PC-9 (cell line): ENCODE measurements at regions of chr11 and their contacts with region 1.

Region 1: GRCh38 chr11:65726660-65727059 is 6.1 kb upstream of the RNASEH2C start:
- DNase-seq: peak in 1 of 2 experiments; percentile 31
- H3K4me3 ChIP-seq: no peak overlapping the region
- H3K27ac ChIP-seq: no peak overlapping the region
- H3K4me1 ChIP-seq: no peaks in the 10 kb centered on the region
- H3K27me3 ChIP-seq: peaks cover 6% of the 10 kb centered on the region; the same call in 1 of the 2 replicates
- CTCF ChIP-seq: no peak

Region 2: DNA sequence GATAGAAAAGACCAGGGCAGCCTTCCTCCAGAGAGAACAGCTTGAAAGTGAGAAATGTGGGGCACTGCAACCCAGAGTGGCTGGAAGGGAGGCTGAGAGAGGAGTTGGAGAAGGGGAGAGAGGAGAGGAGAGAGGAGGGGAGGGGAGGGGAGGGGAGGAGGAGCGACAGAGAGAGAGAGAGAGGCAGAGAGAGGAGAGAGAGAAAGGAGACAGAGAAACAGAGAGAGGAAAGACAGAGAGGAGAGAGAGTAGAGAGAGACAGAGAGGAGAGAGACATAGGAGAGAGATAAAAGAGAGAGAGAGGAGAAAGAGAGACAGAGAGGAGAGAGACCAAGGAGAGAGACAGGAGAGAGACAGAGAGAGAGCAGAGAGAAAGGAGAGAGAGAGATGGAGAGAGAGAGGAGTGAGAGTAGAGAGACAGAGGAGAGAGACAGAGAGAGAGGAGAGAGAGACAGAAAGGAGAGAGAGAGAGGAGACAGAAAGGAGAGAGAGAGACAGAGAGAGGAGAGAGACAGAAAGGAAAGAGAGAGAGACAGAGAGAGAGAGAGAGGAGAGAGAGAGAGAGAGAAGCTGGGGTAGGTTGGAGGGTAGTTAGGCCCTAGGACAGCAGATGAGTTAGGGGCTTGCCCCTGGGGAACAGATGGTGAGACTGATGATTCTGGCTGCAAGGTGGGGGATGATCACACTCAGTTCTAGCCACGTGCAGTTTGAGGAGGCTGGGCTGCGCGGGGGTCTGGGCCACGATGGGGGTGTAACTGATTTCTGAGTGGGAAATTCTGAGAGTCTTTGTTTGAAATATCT is 210.3 kb before region 1 on chr11:
- CTCF ChIA-PET with region 1: interaction called, 13 read pairs
- POLR2A ChIA-PET with region 1: no interaction called
- intact Hi-C with region 1: no loop called
- DNase-seq: no peak
- H3K4me3 ChIP-seq: no peak overlapping the region
- H3K27ac ChIP-seq: no peak overlapping the region
- H3K4me1 ChIP-seq: no peaks in the 10 kb centered on the region
- H3K27me3 ChIP-seq: no peaks in the 10 kb centered on the region
- CTCF ChIP-seq: no peak; the same call in 1 of the 2 replicates

Region 3: GRCh38 chr11:65773784-65774411 is 47.2 kb after region 1 on chr11:
- CTCF ChIA-PET with region 1: interaction called, 11 read pairs
- POLR2A ChIA-PET with region 1: no interaction called
- intact Hi-C with region 1: no loop called
- DNase-seq: no peak
- H3K4me3 ChIP-seq: no peak overlapping the region
- H3K27ac ChIP-seq: no peak overlapping the region
- H3K4me1 ChIP-seq: peaks cover 32% of the 10 kb centered on the region
- H3K27me3 ChIP-seq: no peaks in the 10 kb centered on the region
- CTCF ChIP-seq: no peak

Region 4: GRCh38 chr11:65810046-65810868 is 83.6 kb after region 1 on chr11:
- CTCF ChIA-PET with region 1: interaction called, 11 read pairs
- POLR2A ChIA-PET with region 1: no interaction called
- intact Hi-C with region 1: no loop called
- DNase-seq: no peak
- H3K4me3 ChIP-seq: no peak overlapping the region
- H3K27ac ChIP-seq: no peak overlapping the region
- H3K4me1 ChIP-seq: no peaks in the 10 kb centered on the region
- H3K27me3 ChIP-seq: no peaks in the 10 kb centered on the region
- CTCF ChIP-seq: no peak